IMR-90 (cell line): ENCODE measurements at regions of chr13 and their contacts with region 1.

Region 1: DNA sequence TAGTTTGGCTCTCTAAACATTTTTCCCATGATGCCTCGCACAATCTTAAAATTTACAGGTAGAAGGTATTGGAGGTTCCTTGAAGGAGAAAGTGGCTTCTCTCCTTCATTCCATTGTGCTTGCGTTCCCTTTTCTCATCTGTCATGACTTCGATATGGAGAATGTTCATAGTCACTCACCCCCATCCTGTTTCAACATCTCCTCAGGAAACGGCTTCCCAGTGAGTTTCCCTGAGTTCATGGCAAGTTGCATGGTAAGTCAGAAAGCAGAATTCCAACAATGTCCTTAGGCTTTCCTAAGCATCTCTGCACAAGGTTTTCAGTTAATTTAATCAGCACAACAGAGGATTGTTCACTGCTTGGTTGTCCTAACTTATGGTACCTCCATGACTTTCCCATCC is 581.8 kb upstream of the SLITRK5 start:
- DNase-seq: peak; percentile 95
- ATAC-seq: peak; percentile 48
- H3K4me3 ChIP-seq: no peak overlapping the region
- H3K27ac ChIP-seq: no peak overlapping the region
- H3K4me1 ChIP-seq: peaks cover 4% of the 10 kb centered on the region; the same call in 1 of the 2 replicates
- H3K27me3 ChIP-seq: no peaks in the 10 kb centered on the region
- CTCF ChIP-seq: no peak
- POLR2A ChIP-seq: no peak
- RAD21 ChIP-seq: no peak

Region 2: GRCh38 chr13:87120476-87120875 is 31.1 kb after region 1 on chr13:
- CTCF ChIA-PET with region 1: no interaction called
- POLR2A ChIA-PET with region 1: no interaction called
- dilution Hi-C with region 1: no loop called
- in situ Hi-C with region 1: no loop called
- intact Hi-C with region 1: loop called (anchors 2 kb)
- DNase-seq: peak; percentile 44
- ATAC-seq: no peak
- H3K4me3 ChIP-seq: no peak overlapping the region
- H3K27ac ChIP-seq: no peak overlapping the region
- H3K4me1 ChIP-seq: peaks cover 3% of the 10 kb centered on the region
- H3K27me3 ChIP-seq: no peaks in the 10 kb centered on the region
- CTCF ChIP-seq: no peak
- POLR2A ChIP-seq: no peak
- RAD21 ChIP-seq: no peak

Region 3: DNA sequence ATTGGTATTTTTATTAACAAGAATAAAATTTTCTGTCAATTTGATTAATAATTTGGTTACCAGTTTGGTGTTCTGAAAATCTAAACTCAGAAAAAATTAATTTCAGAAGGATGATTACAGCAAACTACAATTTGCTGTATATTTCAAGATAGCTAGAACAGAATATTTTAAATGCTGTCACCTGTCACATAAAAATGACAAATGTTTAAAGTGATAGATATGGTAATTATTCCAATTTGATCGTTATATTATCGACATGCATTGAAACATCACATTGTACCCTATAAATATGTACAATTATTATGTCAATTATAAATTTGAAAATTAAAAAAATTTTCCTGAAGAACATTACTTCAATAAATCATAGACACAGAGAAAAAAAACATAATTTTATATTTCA is 524.9 kb after region 1 on chr13:
- CTCF ChIA-PET with region 1: no interaction called
- POLR2A ChIA-PET with region 1: no interaction called
- dilution Hi-C with region 1: no loop called
- in situ Hi-C with region 1: no loop called
- intact Hi-C with region 1: no loop called
- DNase-seq: no peak
- ATAC-seq: no peak
- H3K4me3 ChIP-seq: no peak overlapping the region
- H3K27ac ChIP-seq: no peak overlapping the region
- H3K4me1 ChIP-seq: no peaks in the 10 kb centered on the region
- H3K27me3 ChIP-seq: no peaks in the 10 kb centered on the region
- CTCF ChIP-seq: no peak
- POLR2A ChIP-seq: no peak
- RAD21 ChIP-seq: no peak